ENCODE measurements at regions of chr17 and their contacts with region 1.

Region 1: GRCh38 chr17:32136856-32137255 is 5.4 kb upstream of the RHOT1 start:
- DNase-seq: no peak
- H3K4me3 ChIP-seq: no peak overlapping the region
- H3K27ac ChIP-seq: no peak overlapping the region
- H3K4me1 ChIP-seq: peaks cover 0 to 9% of the 10 kb centered on the region in 2 donors
- H3K27me3 ChIP-seq: no peaks in the 10 kb centered on the region
- CTCF ChIP-seq: no peak
- POLR2A ChIP-seq: no peak

Region 2: DNA sequence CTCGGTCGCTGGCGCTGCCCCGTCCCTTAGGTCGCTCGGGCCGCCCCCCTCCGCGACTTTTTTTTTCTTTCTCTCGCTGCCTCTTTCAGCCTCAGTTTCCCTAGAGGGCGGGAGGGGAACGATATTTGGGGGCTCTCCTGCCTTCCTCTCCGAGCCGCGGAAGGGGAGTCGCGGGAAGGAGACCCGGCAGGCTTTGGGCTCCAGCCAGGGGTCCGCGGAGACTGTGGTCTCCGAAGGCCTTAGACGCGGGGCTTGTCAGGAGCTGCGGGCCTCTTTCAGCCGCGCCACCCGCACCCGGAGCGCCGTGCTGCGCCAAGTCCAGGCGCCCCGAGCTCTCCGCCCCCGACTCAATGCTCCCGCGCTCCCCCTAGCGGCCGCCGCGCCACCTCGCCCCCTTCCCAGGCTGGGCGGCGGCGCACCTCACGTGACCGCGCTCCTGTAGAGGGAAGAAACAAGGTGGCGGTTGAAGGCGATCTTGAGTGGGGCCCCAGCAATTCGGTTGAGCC is 129.8 kb before region 1 on chr17 and contains the start of gene LRRC37B:
- intact Hi-C with region 1: loop called in 1 of 2 experiments (anchors 5 kb)
- DNase-seq: peak; percentile 81 to 91 (median 87)
- H3K4me3 ChIP-seq: peak within 1 kb of the TSS; percentile 56 to 96 (median 74)
- H3K27ac ChIP-seq: peak within 1 kb of the TSS in 4 of 5 donors; percentile 58 to 91 (median 80)
- H3K4me1 ChIP-seq: peaks cover 21 to 24% of the 10 kb centered on the region in 2 donors
- H3K27me3 ChIP-seq: no peaks in the 10 kb centered on the region
- CTCF ChIP-seq: peak; percentile 65 to 96 (median 92)
- POLR2A ChIP-seq: peak in 1 of 2 donors; percentile 53
- total RNA-seq, gene LRRC37B: 7.4 to 37.3 (median 12.9) TPM

Region 3: DNA sequence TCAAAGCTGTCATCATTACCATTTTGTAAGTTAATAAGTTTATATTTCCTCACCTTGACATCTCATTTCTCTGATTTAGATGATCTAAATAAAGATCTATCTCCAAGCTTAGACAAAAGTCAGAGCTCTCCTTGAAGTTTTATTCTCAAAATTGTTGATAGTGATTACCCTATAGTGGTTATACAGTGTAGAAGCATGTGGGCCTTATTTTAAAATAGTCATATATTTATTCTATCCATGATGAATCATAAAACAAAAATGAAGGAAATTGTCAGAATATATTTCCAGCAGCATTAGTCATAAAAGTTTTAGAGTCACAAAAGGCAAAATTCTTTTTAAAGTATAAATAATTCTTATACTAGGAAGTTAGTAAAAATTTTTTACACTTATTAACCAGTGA is 54.5 kb after region 1 on chr17:
- intact Hi-C with region 1: no loop called
- DNase-seq: no peak
- H3K4me3 ChIP-seq: no peak overlapping the region
- H3K27ac ChIP-seq: no peak overlapping the region
- H3K4me1 ChIP-seq: no peaks in the 10 kb centered on the region
- H3K27me3 ChIP-seq: no peaks in the 10 kb centered on the region
- CTCF ChIP-seq: no peak
- POLR2A ChIP-seq: no peak

Measured in adrenal gland (tissue), 19 donors.